Right cardiac atrium (tissue), 5 donors: ENCODE measurements at regions of chr22 and their contacts with region 1.

Region 1: GRCh38 chr22:20090348-20091240 is 10.6 kb downstream of the DGCR8 start:
- DNase-seq: no peak
- ATAC-seq: no peak
- H3K4me3 ChIP-seq: no peak overlapping the region
- H3K27ac ChIP-seq: no peak overlapping the region
- H3K4me1 ChIP-seq: no peaks in the 10 kb centered on the region
- H3K27me3 ChIP-seq: no peaks in the 10 kb centered on the region

Region 2: GRCh38 chr22:19398206-19398605 is 692.4 kb before region 1 on chr22:
- intact Hi-C with region 1: loop called in 1 of 4 experiments (anchors 10 kb)
- DNase-seq: no peak
- ATAC-seq: no peak
- H3K4me3 ChIP-seq: no peak overlapping the region
- H3K27ac ChIP-seq: no peak overlapping the region
- H3K4me1 ChIP-seq: no peaks in the 10 kb centered on the region
- H3K27me3 ChIP-seq: no peaks in the 10 kb centered on the region

Region 3: GRCh38 chr22:20186183-20186870 is 95.7 kb after region 1 on chr22:
- intact Hi-C with region 1: no loop called
- DNase-seq: no peak
- ATAC-seq: no peak
- H3K4me3 ChIP-seq: no peak overlapping the region
- H3K27ac ChIP-seq: no peak overlapping the region
- H3K4me1 ChIP-seq: no peaks in the 10 kb centered on the region
- H3K27me3 ChIP-seq: no peaks in the 10 kb centered on the region